Mammary epithelial cell (primary cell): ENCODE measurements at regions of chr5 and their contacts with region 1.

Region 1: DNA sequence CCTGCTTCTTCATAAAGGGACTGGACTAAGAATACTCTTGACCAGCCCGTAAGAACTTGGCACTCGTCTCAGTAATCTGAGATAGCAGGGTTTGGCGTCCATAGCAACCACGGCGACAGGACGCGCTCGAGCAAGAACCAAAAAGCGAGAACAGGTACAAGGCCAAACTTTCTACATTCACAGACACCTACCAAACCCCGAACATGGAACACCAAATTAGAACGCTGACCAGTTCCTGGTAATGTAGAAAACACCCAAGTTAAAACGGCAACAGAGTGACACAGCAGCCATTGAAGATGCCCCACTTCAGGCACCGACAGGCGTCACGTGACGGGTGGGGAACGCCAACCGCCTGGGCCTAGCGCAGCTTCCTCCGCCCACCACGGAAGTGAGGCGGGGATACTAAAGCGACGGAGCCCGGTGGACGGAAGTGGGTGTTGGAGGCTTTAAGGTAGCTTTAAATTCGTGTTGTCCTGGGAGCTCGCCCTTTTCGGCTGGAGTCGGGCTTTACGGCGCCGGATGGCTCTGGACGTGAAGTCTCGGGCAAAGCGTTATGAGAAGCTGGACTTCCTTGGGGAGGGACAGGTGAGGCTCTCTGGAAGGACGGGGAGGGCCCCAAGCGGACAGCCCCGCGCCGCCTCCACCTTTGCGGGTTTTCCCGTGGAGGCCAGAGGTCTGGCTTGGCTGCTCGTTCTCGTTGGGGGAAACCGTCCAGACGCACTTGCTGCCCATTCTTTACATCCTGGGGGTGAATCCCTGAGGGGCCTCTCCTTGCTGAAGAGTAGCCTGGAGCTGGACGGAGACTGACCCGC is at the start of gene CDK7:
- DNase-seq: peak; percentile 93
- H3K4me3 ChIP-seq: peak within 1 kb of the TSS; percentile 75 to 97 (median 84)
- H3K27ac ChIP-seq: peak within 1 kb of the TSS; percentile 89
- H3K4me1 ChIP-seq: peaks cover 32% of the 10 kb centered on the region
- H3K27me3 ChIP-seq: no peaks in the 10 kb centered on the region
- CTCF ChIP-seq: no peak
- total RNA-seq, gene CDK7: 41.2 to 52.4 TPM

Region 2: DNA sequence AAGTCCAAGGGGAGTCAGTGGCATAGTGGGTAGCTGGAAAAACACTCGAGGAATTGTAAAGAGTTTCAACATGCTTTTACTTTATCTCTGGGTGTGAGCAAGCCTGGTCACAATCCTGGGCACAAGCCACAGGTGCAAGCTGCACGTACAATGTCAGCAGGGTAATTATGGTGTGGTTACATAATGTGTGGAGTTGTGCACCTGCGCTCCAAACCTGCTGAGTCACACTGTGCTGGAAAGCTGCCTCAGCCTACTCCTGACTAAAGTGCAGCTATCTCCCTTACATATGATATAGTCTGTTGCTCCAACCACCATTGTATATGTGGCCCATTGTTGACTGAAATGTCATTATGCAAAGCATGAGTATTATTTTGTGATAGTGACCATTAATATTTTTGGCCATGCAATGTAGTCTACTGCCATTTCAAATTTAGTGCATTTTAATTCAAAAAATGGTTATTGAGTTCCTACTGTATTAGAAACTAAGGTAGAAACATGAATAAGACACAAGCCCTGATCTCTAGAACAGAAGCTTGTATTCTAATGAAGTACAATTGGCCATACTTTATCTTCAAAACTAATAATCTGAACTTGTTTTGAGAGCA is 301.7 kb before region 1 on chr5:
- CTCF ChIA-PET with region 1: no interaction called
- dilution Hi-C with region 1: no loop called
- in situ Hi-C with region 1: no loop called
- intact Hi-C with region 1: no loop called
- DNase-seq: no peak
- H3K4me3 ChIP-seq: no peak overlapping the region
- H3K27ac ChIP-seq: no peak overlapping the region
- H3K4me1 ChIP-seq: no peaks in the 10 kb centered on the region
- H3K27me3 ChIP-seq: no peaks in the 10 kb centered on the region
- CTCF ChIP-seq: no peak

Region 3: DNA sequence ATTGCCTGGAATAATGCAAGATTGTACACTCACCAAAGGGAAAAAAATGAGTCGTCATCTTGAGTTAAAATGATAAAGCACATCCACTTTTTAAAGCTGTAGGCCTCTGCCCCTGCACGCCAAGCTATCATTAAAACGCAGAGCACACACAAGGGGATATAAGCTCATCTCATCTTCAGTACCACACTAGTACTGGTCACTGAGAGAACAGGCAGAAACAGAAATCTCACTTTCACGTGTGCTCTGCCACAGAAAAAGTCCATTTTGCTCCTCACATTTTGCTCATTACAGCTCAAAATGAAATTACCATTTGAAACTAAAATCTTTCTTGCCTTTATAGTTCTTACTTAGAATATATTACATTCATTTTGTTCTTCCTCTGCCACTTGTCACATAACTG is 240.0 kb before region 1 on chr5:
- CTCF ChIA-PET with region 1: no interaction called
- dilution Hi-C with region 1: no loop called
- in situ Hi-C with region 1: no loop called
- intact Hi-C with region 1: no loop called
- DNase-seq: no peak
- H3K4me3 ChIP-seq: no peak overlapping the region
- H3K27ac ChIP-seq: no peak overlapping the region
- H3K4me1 ChIP-seq: peaks cover 15% of the 10 kb centered on the region
- H3K27me3 ChIP-seq: no peaks in the 10 kb centered on the region
- CTCF ChIP-seq: no peak

Region 4: GRCh38 chr5:69166686-69167492 is 67.8 kb before region 1 on chr5 and contains the start of gene CCNB1:
- CTCF ChIA-PET with region 1: no interaction called
- dilution Hi-C with region 1: no loop called
- in situ Hi-C with region 1: no loop called
- intact Hi-C with region 1: loop called (anchors 5 kb)
- DNase-seq: peak; percentile 98
- H3K4me3 ChIP-seq: peak within 1 kb of the TSS; percentile 74 to 87 (median 76)
- H3K27ac ChIP-seq: peak within 1 kb of the TSS; percentile 81
- H3K4me1 ChIP-seq: peaks cover 19% of the 10 kb centered on the region
- H3K27me3 ChIP-seq: no peaks in the 10 kb centered on the region
- CTCF ChIP-seq: no peak
- total RNA-seq, gene CCNB1: 22.5 to 151 TPM

Region 5: GRCh38 chr5:69189162-69190086 is 45.2 kb before region 1 on chr5 and contains the start of gene CENPH:
- CTCF ChIA-PET with region 1: no interaction called
- dilution Hi-C with region 1: no loop called
- in situ Hi-C with region 1: no loop called
- intact Hi-C with region 1: loop called (anchors 1 kb)
- DNase-seq: peak; percentile 87
- H3K4me3 ChIP-seq: peak within 1 kb of the TSS; percentile 78 to 96 (median 85)
- H3K27ac ChIP-seq: peak within 1 kb of the TSS; percentile 94
- H3K4me1 ChIP-seq: peaks cover 7% of the 10 kb centered on the region
- H3K27me3 ChIP-seq: no peaks in the 10 kb centered on the region
- CTCF ChIP-seq: no peak
- total RNA-seq, gene CENPH: 3.3 to 26.3 TPM

Region 6: GRCh38 chr5:69217548-69218526 is 16.8 kb before region 1 on chr5:
- CTCF ChIA-PET with region 1: no interaction called
- dilution Hi-C with region 1: no loop called
- in situ Hi-C with region 1: no loop called
- intact Hi-C with region 1: loop called (anchors 1 kb)
- DNase-seq: peak; percentile 89
- H3K4me3 ChIP-seq: peak overlapping the region; percentile 95 to 100 (median 100)
- H3K27ac ChIP-seq: peak overlapping the region; percentile 78
- H3K4me1 ChIP-seq: peaks cover 10% of the 10 kb centered on the region
- H3K27me3 ChIP-seq: no peaks in the 10 kb centered on the region
- CTCF ChIP-seq: peak; percentile 5 to 28

Region 7: GRCh38 chr5:69250598-69250997 is 15.9 kb after region 1 on chr5:
- CTCF ChIA-PET with region 1: no interaction called
- dilution Hi-C with region 1: no loop called
- in situ Hi-C with region 1: no loop called
- intact Hi-C with region 1: loop called (anchors 2 kb)
- DNase-seq: no peak
- H3K4me3 ChIP-seq: no peak overlapping the region
- H3K27ac ChIP-seq: no peak overlapping the region
- H3K4me1 ChIP-seq: no peaks in the 10 kb centered on the region
- H3K27me3 ChIP-seq: no peaks in the 10 kb centered on the region
- CTCF ChIP-seq: no peak

Region 8: DNA sequence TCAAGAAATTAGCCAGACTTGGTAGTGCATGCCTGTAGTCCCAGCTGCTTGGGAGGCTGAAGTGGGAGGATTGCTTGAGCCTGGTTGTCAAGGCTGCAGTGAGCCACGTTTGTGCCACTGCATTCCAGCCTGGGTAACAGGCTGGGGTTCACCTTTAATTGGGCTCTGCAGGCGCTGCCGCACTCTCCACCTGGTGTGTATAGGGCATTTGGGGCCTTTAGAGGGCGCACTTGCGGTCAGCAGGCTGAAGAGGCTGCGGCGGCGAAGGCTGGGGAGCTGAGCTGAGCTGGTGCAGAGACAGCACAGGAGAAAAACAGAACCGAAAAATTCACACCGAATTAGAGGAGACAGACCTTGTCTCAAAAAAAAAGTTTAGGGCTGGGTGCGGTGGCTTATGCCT is 31.3 kb after region 1 on chr5:
- CTCF ChIA-PET with region 1: interaction called, 11 read pairs
- dilution Hi-C with region 1: no loop called
- in situ Hi-C with region 1: no loop called
- intact Hi-C with region 1: no loop called
- DNase-seq: no peak
- H3K4me3 ChIP-seq: no peak overlapping the region
- H3K27ac ChIP-seq: no peak overlapping the region
- H3K4me1 ChIP-seq: no peaks in the 10 kb centered on the region
- H3K27me3 ChIP-seq: no peaks in the 10 kb centered on the region
- CTCF ChIP-seq: peak; percentile 10 to 33

Region 9: DNA sequence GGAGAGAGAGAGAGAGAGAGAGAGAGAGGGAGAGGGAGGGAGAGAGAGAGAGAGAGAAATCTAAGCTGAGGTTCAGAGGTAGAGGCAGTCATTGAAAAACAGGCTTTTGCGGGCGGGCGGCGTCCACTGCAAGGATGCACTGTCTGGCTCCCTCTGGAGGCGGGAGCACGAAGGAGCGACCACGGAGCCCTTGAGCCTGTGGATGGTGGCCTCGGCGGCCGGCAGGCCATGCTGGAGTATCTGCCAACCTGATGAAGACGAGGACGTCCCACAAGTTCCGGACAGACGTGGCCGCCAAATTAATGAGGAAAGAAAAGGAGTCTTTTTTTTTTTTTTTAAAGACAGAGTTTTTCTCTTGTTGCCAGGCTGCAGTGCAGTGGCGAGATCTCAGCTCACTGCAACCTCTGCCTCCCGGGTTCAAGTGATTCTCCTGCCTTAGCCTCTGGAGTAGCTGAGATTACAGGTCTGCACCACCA is 100.2 kb after region 1 on chr5:
- CTCF ChIA-PET with region 1: no interaction called
- dilution Hi-C with region 1: no loop called
- in situ Hi-C with region 1: loop called in 1 of 2 experiments (anchors 25 kb)
- intact Hi-C with region 1: no loop called
- DNase-seq: peak; percentile 62
- H3K4me3 ChIP-seq: no peak overlapping the region
- H3K27ac ChIP-seq: no peak overlapping the region
- H3K4me1 ChIP-seq: peaks cover 15% of the 10 kb centered on the region
- H3K27me3 ChIP-seq: no peaks in the 10 kb centered on the region
- CTCF ChIP-seq: peak; percentile 68 to 85